Activated naive CD4-positive, alpha-beta T cell treated with anti-CD3 and anti-CD28 coated beads for 36 hours (primary cell): ENCODE measurements at regions of chr20 and their contacts with region 1.

Region 1: GRCh38 chr20:50070991-50071888 is 41.7 kb downstream of the UBE2V1 start:
- DNase-seq: peak; percentile 92
- H3K4me3 Mint-ChIP-seq: peak overlapping the region; percentile 71
- H3K27ac Mint-ChIP-seq: no peak overlapping the region
- H3K4me1 Mint-ChIP-seq: peaks cover 5% of the 10 kb centered on the region
- H3K27me3 Mint-ChIP-seq: no peaks in the 10 kb centered on the region

Region 2: GRCh38 chr20:49964964-49965780 is 106.1 kb before region 1 on chr20:
- CTCF ChIA-PET with region 1: interaction called, 25 read pairs
- intact Hi-C with region 1: no loop called
- DNase-seq: peak; percentile 53
- H3K4me3 Mint-ChIP-seq: no peak overlapping the region
- H3K27ac Mint-ChIP-seq: no peak overlapping the region
- H3K4me1 Mint-ChIP-seq: peaks cover 1% of the 10 kb centered on the region
- H3K27me3 Mint-ChIP-seq: no peaks in the 10 kb centered on the region

Region 3: GRCh38 chr20:50058747-50059404 is 12.4 kb before region 1 on chr20:
- CTCF ChIA-PET with region 1: interaction called, 11 read pairs
- intact Hi-C with region 1: no loop called
- DNase-seq: no peak
- H3K4me3 Mint-ChIP-seq: no peak overlapping the region
- H3K27ac Mint-ChIP-seq: no peak overlapping the region
- H3K4me1 Mint-ChIP-seq: no peaks in the 10 kb centered on the region
- H3K27me3 Mint-ChIP-seq: peaks cover under 1% of the 10 kb centered on the region

Region 4: DNA sequence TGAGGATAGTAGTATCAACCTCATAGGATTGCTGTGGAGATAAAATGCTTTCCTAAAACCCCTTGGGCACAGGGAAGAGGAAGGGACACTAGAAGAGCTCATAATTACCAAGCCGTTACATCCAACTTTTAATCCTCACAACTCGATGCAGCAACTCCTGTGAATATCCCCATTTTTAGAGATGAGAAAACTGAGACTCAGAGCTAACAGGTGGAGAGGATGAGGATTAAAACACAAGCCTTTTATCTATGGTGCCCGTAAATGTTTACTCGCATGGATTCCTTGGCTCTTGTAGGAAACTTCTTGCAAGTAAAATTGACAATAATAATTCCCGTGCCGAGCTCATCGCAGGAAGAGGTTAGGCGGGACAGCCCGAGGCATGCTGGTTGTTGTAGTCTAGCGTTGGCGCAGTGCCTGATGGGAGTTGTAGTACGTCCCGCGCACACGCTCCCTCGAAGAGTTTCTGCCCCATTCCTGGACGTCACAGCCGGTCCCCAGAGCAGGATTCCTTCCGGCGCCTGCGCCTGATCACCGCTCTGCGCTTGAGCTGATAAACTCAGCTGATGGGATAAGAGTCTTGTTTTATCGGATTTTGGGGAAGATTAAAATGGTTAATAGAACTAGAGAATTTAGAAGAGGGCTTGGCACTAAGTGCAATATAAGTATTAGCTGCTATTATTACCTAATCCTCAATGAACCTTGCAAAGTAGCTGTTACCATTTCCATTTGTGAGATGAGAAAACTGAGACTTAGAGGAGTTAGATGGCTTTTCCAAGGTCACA is 44.5 kb after region 1 on chr20:
- CTCF ChIA-PET with region 1: interaction called, 12 read pairs
- intact Hi-C with region 1: no loop called
- DNase-seq: peak; percentile 96
- H3K4me3 Mint-ChIP-seq: peak overlapping the region; percentile 89
- H3K27ac Mint-ChIP-seq: peak overlapping the region; percentile 86
- H3K4me1 Mint-ChIP-seq: peaks cover 44% of the 10 kb centered on the region
- H3K27me3 Mint-ChIP-seq: no peaks in the 10 kb centered on the region

Region 5: GRCh38 chr20:50172347-50173013 is 101.2 kb after region 1 on chr20:
- CTCF ChIA-PET with region 1: interaction called, 11 read pairs
- intact Hi-C with region 1: loop called (anchors 2 kb)
- DNase-seq: peak; percentile 31
- H3K4me3 Mint-ChIP-seq: no peak overlapping the region
- H3K27ac Mint-ChIP-seq: no peak overlapping the region
- H3K4me1 Mint-ChIP-seq: peaks cover 4% of the 10 kb centered on the region
- H3K27me3 Mint-ChIP-seq: peaks cover 11% of the 10 kb centered on the region

Region 6: DNA sequence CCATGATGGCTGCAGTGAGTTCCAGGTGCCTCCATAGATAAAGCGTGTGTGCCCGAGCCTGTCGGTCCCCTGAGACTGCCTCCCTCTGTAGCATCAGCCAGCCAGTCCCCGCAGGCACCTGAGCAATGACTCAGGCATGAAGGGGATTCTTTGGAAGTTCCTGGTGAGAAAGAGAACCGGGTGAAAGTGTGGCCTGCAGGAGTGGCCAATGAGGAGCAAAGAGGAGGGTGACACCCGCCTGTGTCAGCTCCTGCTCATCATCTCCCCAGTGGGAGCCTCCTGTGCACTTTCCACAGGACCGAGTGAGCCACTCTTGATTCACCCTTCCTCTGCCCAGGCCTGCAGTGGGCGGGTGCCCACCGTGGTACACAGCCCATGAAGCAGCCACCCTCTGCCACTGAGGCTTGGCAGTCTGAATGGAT is 367.8 kb after region 1 on chr20:
- CTCF ChIA-PET with region 1: no interaction called
- intact Hi-C with region 1: no loop called
- DNase-seq: no peak
- H3K4me3 Mint-ChIP-seq: no peak overlapping the region
- H3K27ac Mint-ChIP-seq: no peak overlapping the region
- H3K4me1 Mint-ChIP-seq: peaks cover 12% of the 10 kb centered on the region
- H3K27me3 Mint-ChIP-seq: no peaks in the 10 kb centered on the region